Right ventricle myocardium inferior (tissue), 1 donor: ENCODE measurements at regions of chr12 and their contacts with region 1.

Region 1: DNA sequence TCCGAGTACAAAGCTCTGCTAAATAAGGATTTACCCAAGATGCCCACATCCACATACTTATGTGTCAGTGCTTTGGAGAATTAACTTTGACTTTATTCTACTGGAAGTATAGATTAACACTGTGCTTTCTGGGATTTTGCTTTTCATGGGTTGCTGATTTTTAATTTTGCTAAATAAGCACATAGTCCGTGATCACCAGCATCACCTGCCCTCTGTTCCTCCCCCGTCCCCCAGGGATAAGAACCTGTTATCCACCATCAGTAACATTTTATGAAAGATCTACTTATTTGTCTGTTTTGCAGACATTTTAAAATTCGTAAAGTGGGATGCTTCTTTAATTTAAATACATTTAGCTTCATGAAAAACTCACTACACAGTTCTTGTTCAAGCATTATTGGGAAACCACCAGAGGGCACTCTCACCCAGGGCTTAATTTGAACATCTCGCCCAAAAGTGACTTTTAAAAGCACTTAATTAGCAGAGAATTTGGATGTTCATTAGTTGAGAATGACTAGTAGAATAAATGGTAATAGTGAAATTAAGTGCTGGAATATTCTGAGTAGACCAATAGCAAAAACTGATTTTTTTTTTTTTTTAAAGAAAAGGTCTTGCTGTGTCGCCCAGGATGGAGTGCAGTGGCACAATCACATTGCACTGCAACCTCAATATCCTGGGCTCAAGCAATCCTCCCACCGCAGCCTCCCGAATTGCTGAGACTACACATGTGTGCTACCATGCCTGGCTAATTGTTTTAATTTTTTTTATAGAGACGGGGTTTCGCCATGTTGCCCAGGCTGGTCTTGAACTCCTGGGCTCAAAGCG is 35.7 kb downstream of the MRPL42 start:
- DNase-seq: no peak
- ATAC-seq: no peak

Region 2: GRCh38 chr12:93325855-93326254 is 177.2 kb before region 1 on chr12:
- intact Hi-C with region 1: no loop called
- DNase-seq: no peak
- ATAC-seq: no peak

Region 3: GRCh38 chr12:93979189-93979588 is 476.2 kb after region 1 on chr12:
- intact Hi-C with region 1: loop called (anchors 5 kb)
- DNase-seq: no peak
- ATAC-seq: no peak